Endothelial cell of umbilical vein (primary cell): ENCODE measurements at regions of chr22 and their contacts with region 1.

Region 1: DNA sequence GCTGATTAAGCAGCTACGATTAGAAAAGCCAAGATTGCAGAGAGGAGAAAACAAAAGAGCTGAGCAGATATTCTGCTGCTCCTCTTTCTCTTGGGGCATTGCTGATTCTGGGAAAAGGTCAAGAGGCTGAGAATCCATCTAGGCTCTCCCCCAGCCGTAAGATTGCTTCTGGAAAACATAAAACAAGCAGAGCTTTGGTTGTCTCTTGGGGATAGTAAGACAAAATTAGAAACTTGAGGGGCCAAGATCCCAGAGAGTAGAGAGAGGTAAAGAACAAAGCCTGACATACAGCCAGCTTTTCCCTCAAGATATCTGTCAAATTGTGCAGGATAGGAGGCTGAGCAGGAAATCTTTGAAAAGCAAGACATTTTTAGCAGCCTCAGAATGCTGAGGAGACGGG is 158.2 kb downstream of the TTC28 start:
- DNase-seq: no peak
- H3K4me3 ChIP-seq: no peak overlapping the region
- H3K27ac ChIP-seq: no peak overlapping the region
- H3K4me1 ChIP-seq: no peaks in the 10 kb centered on the region
- H3K27me3 ChIP-seq: no peaks in the 10 kb centered on the region
- CTCF ChIP-seq: no peak
- POLR2A ChIP-seq: no peak

Region 2: DNA sequence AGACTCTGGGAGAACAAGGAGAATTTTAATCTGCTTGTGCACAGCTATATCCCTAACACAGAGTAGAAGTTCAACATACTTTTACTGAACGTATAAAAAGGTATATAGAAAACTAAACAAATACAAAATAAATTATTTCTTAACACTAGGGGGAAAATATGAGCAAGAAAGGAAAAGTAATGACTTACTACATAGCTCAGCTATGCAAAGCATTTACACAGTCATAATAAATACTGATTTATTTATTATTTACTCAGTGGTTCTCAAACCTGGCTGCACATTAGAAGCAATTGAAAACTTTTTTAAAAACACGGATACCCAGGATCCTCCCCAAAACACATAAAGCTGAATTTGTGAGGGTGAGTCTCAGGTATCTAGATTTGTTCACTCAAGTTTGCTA is 24.3 kb before region 1 on chr22:
- CTCF ChIA-PET with region 1: no interaction called
- POLR2A ChIA-PET with region 1: no interaction called
- dilution Hi-C with region 1: no loop called
- intact Hi-C with region 1: loop called (anchors 1 kb)
- DNase-seq: no peak
- H3K4me3 ChIP-seq: no peak overlapping the region
- H3K27ac ChIP-seq: no peak overlapping the region
- H3K4me1 ChIP-seq: no peaks in the 10 kb centered on the region
- H3K27me3 ChIP-seq: no peaks in the 10 kb centered on the region
- CTCF ChIP-seq: no peak
- POLR2A ChIP-seq: no peak